ENCODE measurements at regions of chr18 and their contacts with region 1.

Region 1: GRCh38 chr18:13381944-13382365 is 163.4 kb downstream of the LDLRAD4 start:
- DNase-seq: peak in 6 of 9 experiments; percentile 41 to 74 (median 51)
- ATAC-seq: peak; percentile 46
- H3K4me3 ChIP-seq: peak overlapping the region; percentile 32 to 57
- H3K4me3 Mint-ChIP-seq: peak overlapping the region; percentile 83
- H3K27ac ChIP-seq: peak overlapping the region; percentile 76 to 94
- H3K27ac Mint-ChIP-seq: peak overlapping the region; percentile 95
- H3K4me1 ChIP-seq: peaks cover 57% of the 10 kb centered on the region
- H3K4me1 Mint-ChIP-seq: peaks cover 65% of the 10 kb centered on the region
- H3K27me3 ChIP-seq: no peaks in the 10 kb centered on the region
- H3K27me3 Mint-ChIP-seq: no peaks in the 10 kb centered on the region
- CTCF ChIP-seq: no peak

Region 2: DNA sequence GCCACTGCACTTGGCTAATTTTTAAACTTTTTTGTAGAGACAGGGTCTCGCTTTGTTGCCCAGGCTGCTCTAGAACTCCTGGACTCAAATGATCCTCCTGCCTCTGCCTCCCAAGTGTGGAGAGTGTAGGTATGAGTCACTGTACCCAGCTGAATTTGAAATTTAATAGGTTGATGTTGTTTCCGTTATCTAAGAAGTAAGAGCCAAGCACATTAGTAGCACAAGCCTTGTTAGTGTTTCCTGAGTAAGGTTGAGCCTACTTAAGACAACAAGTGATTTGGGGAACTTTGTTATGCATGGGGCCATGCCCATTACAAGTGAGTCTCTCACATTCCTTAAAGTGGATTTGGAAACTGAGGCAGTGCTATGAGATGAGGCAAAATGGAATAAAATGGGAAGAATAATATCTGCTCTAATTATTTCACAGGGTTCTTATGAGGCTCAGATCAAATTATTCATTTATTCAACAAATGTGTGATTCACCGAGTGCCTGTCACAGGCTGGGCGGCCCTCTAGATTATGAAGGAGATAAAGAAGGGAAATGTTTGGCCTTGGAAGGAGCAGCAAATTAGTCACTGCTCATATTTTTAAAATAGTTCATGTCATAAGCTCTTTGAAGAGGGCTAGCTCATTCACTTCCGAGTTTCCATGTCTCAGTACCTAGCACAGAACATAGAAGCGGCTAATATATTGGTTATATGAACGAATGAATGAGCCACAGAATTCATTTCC is 53.8 kb after region 1 on chr18:
- CTCF ChIA-PET with region 1: no interaction called
- POLR2A ChIA-PET with region 1: no interaction called
- intact Hi-C with region 1: loop called (anchors 5 kb)
- DNase-seq: no peak
- ATAC-seq: no peak
- H3K4me3 ChIP-seq: no peak overlapping the region
- H3K4me3 Mint-ChIP-seq: no peak overlapping the region
- H3K27ac ChIP-seq: no peak overlapping the region
- H3K27ac Mint-ChIP-seq: peak overlapping the region; percentile 67
- H3K4me1 ChIP-seq: peaks cover 39% of the 10 kb centered on the region
- H3K4me1 Mint-ChIP-seq: peaks cover 43% of the 10 kb centered on the region
- H3K27me3 ChIP-seq: no peaks in the 10 kb centered on the region
- H3K27me3 Mint-ChIP-seq: no peaks in the 10 kb centered on the region
- CTCF ChIP-seq: no peak

Region 3: GRCh38 chr18:13539050-13539449 is 157.1 kb after region 1 on chr18:
- CTCF ChIA-PET with region 1: no interaction called
- POLR2A ChIA-PET with region 1: no interaction called
- intact Hi-C with region 1: loop called in 1 of 2 experiments (anchors 5 kb)
- DNase-seq: peak; percentile 15 to 89 (median 64)
- ATAC-seq: peak; percentile 91
- H3K4me3 ChIP-seq: peak overlapping the region in 1 of 2 experiments; percentile 6
- H3K4me3 Mint-ChIP-seq: peak overlapping the region; percentile 63
- H3K27ac ChIP-seq: peak overlapping the region; percentile 63 to 83
- H3K27ac Mint-ChIP-seq: peak overlapping the region; percentile 91
- H3K4me1 ChIP-seq: peaks cover 66% of the 10 kb centered on the region
- H3K4me1 Mint-ChIP-seq: peaks cover 85% of the 10 kb centered on the region
- H3K27me3 ChIP-seq: no peaks in the 10 kb centered on the region
- H3K27me3 Mint-ChIP-seq: no peaks in the 10 kb centered on the region
- CTCF ChIP-seq: no peak

Region 4: DNA sequence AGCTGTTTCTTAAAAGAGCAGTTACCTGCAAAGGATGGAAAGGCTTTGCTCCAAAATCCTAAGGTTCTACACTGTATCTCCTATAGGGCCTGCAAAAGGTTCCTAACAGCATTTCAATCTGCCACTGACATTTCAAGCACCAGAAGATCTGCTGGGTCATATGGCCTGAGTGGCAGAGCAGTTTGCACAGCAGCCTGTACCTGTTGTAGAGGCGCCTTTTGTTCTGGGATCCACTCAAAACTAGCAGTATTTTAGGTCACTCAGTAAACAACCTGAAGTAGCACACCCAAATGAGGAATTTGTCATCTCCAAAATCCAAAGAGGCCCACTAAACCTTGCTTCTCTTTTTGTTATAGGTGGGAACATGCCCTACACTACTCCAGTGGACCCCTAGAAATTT is 338.2 kb after region 1 on chr18:
- CTCF ChIA-PET with region 1: interaction called, 3 read pairs
- POLR2A ChIA-PET with region 1: no interaction called
- intact Hi-C with region 1: loop called in 1 of 2 experiments (anchors 5 kb)
- DNase-seq: no peak
- ATAC-seq: no peak
- H3K4me3 ChIP-seq: no peak overlapping the region
- H3K4me3 Mint-ChIP-seq: no peak overlapping the region
- H3K27ac ChIP-seq: no peak overlapping the region
- H3K27ac Mint-ChIP-seq: no peak overlapping the region
- H3K4me1 ChIP-seq: peaks cover 7% of the 10 kb centered on the region
- H3K4me1 Mint-ChIP-seq: peaks cover 48% of the 10 kb centered on the region
- H3K27me3 ChIP-seq: no peaks in the 10 kb centered on the region
- H3K27me3 Mint-ChIP-seq: no peaks in the 10 kb centered on the region
- CTCF ChIP-seq: no peak

Measured in CD8-positive, alpha-beta T cell (primary cell).